Naive thymus-derived CD4-positive, alpha-beta T cell (primary cell): ENCODE measurements at regions of chr14 and their contacts with region 1.

Region 1: GRCh38 chr14:60753264-60754119 is 18.9 kb downstream of the MNAT1 start:
- DNase-seq: peak in 8 of 9 donors; percentile 54 to 86 (median 81)
- ATAC-seq: peak; percentile 96
- H3K4me3 ChIP-seq: no peak overlapping the region
- H3K4me3 Mint-ChIP-seq: peak overlapping the region in 9 of 10 donors; percentile 48 to 85 (median 61)
- H3K27ac ChIP-seq: no peak overlapping the region
- H3K27ac Mint-ChIP-seq: peak overlapping the region; percentile 29 to 93 (median 81)
- H3K4me1 ChIP-seq: peaks cover 19 to 20% of the 10 kb centered on the region in 2 donors
- H3K4me1 Mint-ChIP-seq: peaks cover 21 to 64% (median 42%) of the 10 kb centered on the region in 7 donors
- H3K27me3 ChIP-seq: no peaks in the 10 kb centered on the region
- H3K27me3 Mint-ChIP-seq: peaks cover 0 to 7% (median 0%) of the 10 kb centered on the region in 5 donors

Region 2: DNA sequence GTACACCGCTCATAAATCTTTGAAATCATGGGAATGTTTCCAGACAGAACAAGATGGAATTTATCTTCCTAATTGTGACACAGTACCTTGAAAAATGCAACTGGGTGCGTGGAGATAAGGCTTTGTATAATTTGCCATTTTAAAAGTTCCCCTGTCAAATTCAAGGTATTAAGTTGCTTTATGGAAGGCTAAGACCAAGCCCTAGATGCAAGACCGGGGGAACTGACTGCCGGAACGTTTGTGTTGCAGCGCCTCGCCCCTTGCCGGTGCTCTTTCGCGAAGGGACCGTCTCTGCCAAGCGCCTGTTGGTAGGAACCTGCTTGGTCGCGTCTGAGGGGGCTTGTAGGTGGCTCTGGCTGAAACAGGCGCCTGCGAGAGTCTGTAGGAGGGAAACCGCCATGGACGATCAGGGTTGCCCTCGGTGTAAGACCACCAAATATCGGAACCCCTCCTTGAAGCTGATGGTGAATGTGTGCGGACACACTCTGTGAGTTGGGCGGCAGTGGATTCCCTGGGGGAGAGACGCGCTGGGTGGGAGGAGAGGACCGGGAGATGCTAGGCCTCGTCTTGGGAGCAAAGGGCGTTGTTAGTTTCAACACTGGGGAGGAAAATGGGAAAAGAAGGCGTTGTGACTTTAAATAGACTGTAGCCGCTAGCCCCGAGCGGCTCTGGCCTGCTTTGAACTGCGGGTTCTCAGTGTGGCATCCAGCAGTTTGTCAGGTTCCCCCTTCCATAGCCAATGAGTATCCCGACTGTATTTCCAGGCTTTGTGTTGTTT is 18.8 kb before region 1 on chr14 and contains the start of gene MNAT1:
- CTCF ChIA-PET with region 1: no interaction called
- POLR2A ChIA-PET with region 1: no interaction called
- intact Hi-C with region 1: loop called (anchors 1 kb)
- DNase-seq: peak; percentile 65 to 81 (median 75)
- ATAC-seq: peak; percentile 95
- H3K4me3 ChIP-seq: peak within 1 kb of the TSS; percentile 64
- H3K4me3 Mint-ChIP-seq: peak within 1 kb of the TSS; percentile 95 to 100 (median 99)
- H3K27ac ChIP-seq: peak within 1 kb of the TSS; percentile 70
- H3K27ac Mint-ChIP-seq: peak within 1 kb of the TSS; percentile 88 to 99 (median 94)
- H3K4me1 ChIP-seq: peaks cover 0 to 10% of the 10 kb centered on the region in 2 donors
- H3K4me1 Mint-ChIP-seq: peaks cover 22 to 37% (median 29%) of the 10 kb centered on the region in 7 donors
- H3K27me3 ChIP-seq: peaks cover 0 to 4% of the 10 kb centered on the region in 2 donors
- H3K27me3 Mint-ChIP-seq: peaks cover 13 to 42% (median 22%) of the 10 kb centered on the region in 5 donors
- total RNA-seq, gene MNAT1: 16.0 to 39.1 (median 20.0) TPM

Region 3: DNA sequence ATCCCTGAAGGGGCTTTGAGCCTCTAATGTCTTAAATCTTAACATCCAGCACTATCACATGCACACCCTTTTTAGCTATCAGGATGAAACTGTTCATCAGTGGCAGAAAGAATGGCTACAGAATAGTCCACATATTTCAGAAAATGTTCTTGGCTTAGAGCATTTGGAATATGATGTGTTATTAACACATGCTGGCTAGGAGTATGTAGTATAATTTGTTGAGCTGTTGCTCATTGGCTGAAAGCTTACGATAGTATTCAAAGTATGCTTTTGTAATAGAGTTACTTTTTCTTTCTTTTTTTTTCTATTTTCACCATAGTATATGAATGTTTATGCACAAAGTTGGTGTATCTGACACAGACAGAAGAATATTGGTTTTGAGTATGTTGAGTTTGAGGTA is 36.2 kb after region 1 on chr14:
- CTCF ChIA-PET with region 1: no interaction called
- POLR2A ChIA-PET with region 1: no interaction called
- intact Hi-C with region 1: loop called in 1 of 2 experiments (anchors 5 kb)
- DNase-seq: no peak
- ATAC-seq: no peak
- H3K4me3 ChIP-seq: no peak overlapping the region
- H3K4me3 Mint-ChIP-seq: no peak overlapping the region
- H3K27ac ChIP-seq: no peak overlapping the region
- H3K27ac Mint-ChIP-seq: no peak overlapping the region
- H3K4me1 ChIP-seq: no peaks in the 10 kb centered on the region
- H3K4me1 Mint-ChIP-seq: peaks cover 0 to 9% (median 0%) of the 10 kb centered on the region in 7 donors
- H3K27me3 ChIP-seq: no peaks in the 10 kb centered on the region
- H3K27me3 Mint-ChIP-seq: no peaks in the 10 kb centered on the region

Region 4: DNA sequence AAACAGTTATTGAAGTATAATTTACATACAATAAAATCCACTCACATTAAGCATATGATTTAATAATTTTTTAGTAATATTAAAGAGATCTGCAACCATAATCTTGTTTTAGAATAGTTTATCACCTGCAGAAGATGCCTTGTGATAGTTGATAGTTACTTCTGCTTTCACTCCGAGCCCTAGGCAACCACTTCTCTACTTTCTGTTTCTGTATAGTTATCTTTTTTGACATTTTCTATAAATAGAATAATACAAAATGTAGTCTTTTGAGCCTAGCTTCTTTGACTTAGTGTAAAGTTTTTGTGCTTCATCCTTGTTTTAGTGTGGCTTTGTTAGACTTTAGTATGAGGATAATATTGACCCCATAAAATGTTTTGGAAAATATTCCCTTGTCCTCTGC is 92.0 kb after region 1 on chr14:
- CTCF ChIA-PET with region 1: no interaction called
- POLR2A ChIA-PET with region 1: no interaction called
- intact Hi-C with region 1: loop called in 1 of 2 experiments (anchors 5 kb)
- DNase-seq: no peak
- ATAC-seq: no peak
- H3K4me3 ChIP-seq: no peak overlapping the region
- H3K4me3 Mint-ChIP-seq: no peak overlapping the region
- H3K27ac ChIP-seq: no peak overlapping the region
- H3K27ac Mint-ChIP-seq: no peak overlapping the region
- H3K4me1 ChIP-seq: no peaks in the 10 kb centered on the region
- H3K4me1 Mint-ChIP-seq: peaks cover 0 to 7% (median 3%) of the 10 kb centered on the region in 7 donors
- H3K27me3 ChIP-seq: peaks cover 0 to 4% of the 10 kb centered on the region in 2 donors
- H3K27me3 Mint-ChIP-seq: no peaks in the 10 kb centered on the region